Left cardiac atrium (tissue), 4 donors: ENCODE measurements at regions of chr11 and their contacts with region 1.

Region 1: GRCh38 chr11:10653926-10654810 is 39.4 kb downstream of the IRAG1 start:
- DNase-seq: no peak
- ATAC-seq: peak; percentile 36 to 60

Region 2: GRCh38 chr11:10405855-10406592 is 248.1 kb before region 1 on chr11:
- intact Hi-C with region 1: loop called in 1 of 2 experiments (anchors 10 kb)
- DNase-seq: peak; percentile 77
- ATAC-seq: peak; percentile 93

Region 3: GRCh38 chr11:10514210-10514609 is 140.0 kb before region 1 on chr11:
- intact Hi-C with region 1: loop called in 1 of 2 experiments (anchors 10 kb)
- DNase-seq: no peak
- ATAC-seq: no peak

Region 4: DNA sequence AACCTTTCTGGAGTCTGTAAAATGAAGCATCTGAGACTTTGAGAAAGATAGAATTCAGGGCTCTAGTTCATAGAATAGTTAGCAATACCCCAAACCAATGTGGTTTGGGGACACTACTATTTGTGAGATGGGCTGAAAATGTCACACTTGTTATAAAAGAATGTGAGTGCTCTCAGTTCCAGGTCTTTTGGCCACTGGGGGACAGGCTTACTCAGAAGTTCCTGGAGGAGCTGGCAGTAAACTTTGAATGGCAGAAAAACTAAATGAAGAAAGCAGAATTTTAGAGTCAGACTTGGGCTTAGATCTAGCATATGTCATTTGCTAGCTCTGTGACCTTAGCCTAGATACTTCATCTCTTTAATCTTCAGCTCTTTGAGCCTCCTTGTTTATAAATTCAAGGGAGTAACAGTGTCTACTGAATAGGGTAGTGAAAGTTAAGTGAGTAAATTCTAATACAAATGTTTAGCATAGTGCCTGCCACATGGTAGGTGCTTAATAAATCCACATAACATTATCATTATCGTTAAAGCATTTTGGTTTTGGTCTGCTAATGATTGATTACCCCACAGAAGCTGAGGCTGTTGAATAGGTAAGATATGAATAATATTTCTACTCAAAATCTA is 89.4 kb before region 1 on chr11:
- intact Hi-C with region 1: loop called in 1 of 2 experiments (anchors 5 kb)
- DNase-seq: no peak
- ATAC-seq: no peak